ENCODE measurements at regions of chr4 and their contacts with region 1.

Region 1: DNA sequence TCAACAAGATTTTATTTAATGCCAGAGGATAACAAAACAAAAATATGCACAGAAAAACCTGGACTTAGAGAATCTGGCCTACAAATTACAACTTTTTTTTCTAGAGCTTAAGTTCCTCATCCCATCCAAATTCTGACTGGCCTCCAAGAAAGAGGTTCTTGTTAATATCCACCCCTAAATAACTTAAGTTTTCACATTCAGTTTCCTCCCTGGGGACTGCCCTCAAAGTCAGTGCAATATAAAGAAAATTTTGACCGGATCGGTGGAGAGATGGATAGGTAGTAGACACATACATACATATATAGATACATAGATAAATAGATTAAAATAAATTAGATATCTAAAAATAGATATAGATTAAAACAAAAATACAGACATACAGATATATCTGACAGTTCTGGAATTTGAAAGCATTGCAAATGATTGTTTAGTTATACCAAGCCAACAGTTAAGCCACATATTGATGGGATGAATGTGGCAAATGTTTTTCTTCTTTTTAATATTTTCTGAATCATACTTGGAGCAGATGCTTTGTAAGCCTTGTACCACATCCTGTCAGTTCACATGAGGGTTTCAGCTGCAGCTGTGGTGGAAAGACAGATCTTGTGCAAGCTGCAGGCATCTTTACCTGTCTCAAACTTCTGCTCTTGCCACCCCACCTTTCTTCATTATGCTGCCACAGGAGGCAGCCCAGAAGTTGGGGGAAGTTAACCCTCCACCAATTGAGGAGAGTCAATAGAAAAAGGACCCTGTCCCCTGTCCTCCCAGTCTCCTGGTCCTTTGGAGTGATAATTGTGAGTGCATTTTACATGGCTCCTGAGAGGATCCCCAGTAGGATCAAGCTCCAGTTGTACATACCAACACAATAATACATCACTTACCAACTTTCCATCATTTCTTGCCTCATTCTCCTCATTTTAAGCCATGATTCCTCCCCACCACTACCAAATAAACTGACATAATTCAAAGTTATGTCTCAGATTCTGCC is 58.5 kb upstream of the PRDM8 start:
- DNase-seq: peak; percentile 73
- H3K4me3 Mint-ChIP-seq: peak overlapping the region; percentile 36
- H3K27ac Mint-ChIP-seq: peak overlapping the region; percentile 89
- H3K4me1 Mint-ChIP-seq: peaks cover 59% of the 10 kb centered on the region
- H3K27me3 Mint-ChIP-seq: no peaks in the 10 kb centered on the region

Region 2: GRCh38 chr4:80125252-80126177 is 13.3 kb before region 1 on chr4:
- CTCF ChIA-PET with region 1: interaction called, 26 read pairs
- POLR2A ChIA-PET with region 1: no interaction called
- DNase-seq: peak; percentile 68
- H3K4me3 Mint-ChIP-seq: peak overlapping the region; percentile 23
- H3K27ac Mint-ChIP-seq: peak overlapping the region; percentile 84
- H3K4me1 Mint-ChIP-seq: peaks cover 55% of the 10 kb centered on the region
- H3K27me3 Mint-ChIP-seq: no peaks in the 10 kb centered on the region

Measured in activated CD4-positive, alpha-beta T cell treated with anti-CD3 and anti-CD28 coated beads, Interleukin-2, amount 10 ng/mL, durations not matched to agents 7 days and 5 days (primary cell).